ENCODE measurements at regions of chr12 and their contacts with region 1.

Region 1: DNA sequence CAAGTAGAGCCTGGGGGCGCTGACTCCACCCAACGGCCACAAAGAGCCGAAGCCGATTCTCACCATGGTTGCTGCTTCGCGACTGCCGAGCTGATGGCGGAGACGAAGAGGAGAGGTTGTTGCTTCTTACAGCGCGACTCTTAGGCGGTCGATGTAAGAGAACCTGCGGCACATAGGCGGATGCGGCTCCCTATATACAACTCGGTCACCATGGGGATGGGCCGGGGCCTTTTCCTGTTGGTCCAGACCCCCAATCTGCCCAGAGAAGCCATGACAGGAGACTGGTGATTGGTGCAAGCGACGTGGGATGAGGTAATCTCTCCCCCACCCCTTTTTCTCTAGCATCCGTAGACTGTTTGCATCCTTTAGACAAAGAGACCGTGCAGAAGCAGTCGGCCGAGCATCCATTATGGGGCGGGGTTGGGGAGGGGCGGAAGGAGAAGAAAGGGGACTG is at the start of gene TUBA1A:
- DNase-seq: peak; percentile 90 to 99 (median 97)
- H3K4me3 ChIP-seq: peak within 1 kb of the TSS; percentile 79
- H3K4me3 Mint-ChIP-seq: peak within 1 kb of the TSS; percentile 97 to 99 (median 98)
- H3K27ac ChIP-seq: peak within 1 kb of the TSS; percentile 97
- H3K27ac Mint-ChIP-seq: peak within 1 kb of the TSS; percentile 97 to 100 (median 98)
- H3K4me1 ChIP-seq: peaks cover 18% of the 10 kb centered on the region
- H3K4me1 Mint-ChIP-seq: peaks cover 26 to 40% (median 35%) of the 10 kb centered on the region in 3 donors
- H3K27me3 ChIP-seq: no peaks in the 10 kb centered on the region
- H3K27me3 Mint-ChIP-seq: peaks cover 0 to 8% of the 10 kb centered on the region in 2 donors
- total RNA-seq, gene TUBA1A: 67.8 to 70.4 TPM

Region 2: GRCh38 chr12:49110464-49111155 is 78.3 kb before region 1 on chr12 and contains the start of gene LMBR1L:
- CTCF ChIA-PET with region 1: interaction called, 12 read pairs
- POLR2A ChIA-PET with region 1: interaction called, 27 read pairs
- DNase-seq: peak; percentile 92 to 98 (median 96)
- H3K4me3 ChIP-seq: peak within 1 kb of the TSS; percentile 93
- H3K4me3 Mint-ChIP-seq: peak within 1 kb of the TSS; percentile 97 to 99 (median 99)
- H3K27ac ChIP-seq: peak within 1 kb of the TSS; percentile 87
- H3K27ac Mint-ChIP-seq: peak within 1 kb of the TSS; percentile 86 to 98 (median 98)
- H3K4me1 ChIP-seq: peaks cover 21% of the 10 kb centered on the region
- H3K4me1 Mint-ChIP-seq: peaks cover 36 to 44% (median 43%) of the 10 kb centered on the region in 3 donors
- H3K27me3 ChIP-seq: no peaks in the 10 kb centered on the region
- H3K27me3 Mint-ChIP-seq: no peaks in the 10 kb centered on the region
- total RNA-seq, gene LMBR1L: 47.2 to 48.7 TPM

Region 3: GRCh38 chr12:49144384-49144783 is 44.6 kb before region 1 on chr12:
- CTCF ChIA-PET with region 1: no interaction called
- POLR2A ChIA-PET with region 1: no interaction called
- DNase-seq: no peak
- H3K4me3 ChIP-seq: no peak overlapping the region
- H3K4me3 Mint-ChIP-seq: no peak overlapping the region
- H3K27ac ChIP-seq: no peak overlapping the region
- H3K27ac Mint-ChIP-seq: no peak overlapping the region
- H3K4me1 ChIP-seq: no peaks in the 10 kb centered on the region
- H3K4me1 Mint-ChIP-seq: no peaks in the 10 kb centered on the region
- H3K27me3 ChIP-seq: no peaks in the 10 kb centered on the region
- H3K27me3 Mint-ChIP-seq: no peaks in the 10 kb centered on the region

Region 4: DNA sequence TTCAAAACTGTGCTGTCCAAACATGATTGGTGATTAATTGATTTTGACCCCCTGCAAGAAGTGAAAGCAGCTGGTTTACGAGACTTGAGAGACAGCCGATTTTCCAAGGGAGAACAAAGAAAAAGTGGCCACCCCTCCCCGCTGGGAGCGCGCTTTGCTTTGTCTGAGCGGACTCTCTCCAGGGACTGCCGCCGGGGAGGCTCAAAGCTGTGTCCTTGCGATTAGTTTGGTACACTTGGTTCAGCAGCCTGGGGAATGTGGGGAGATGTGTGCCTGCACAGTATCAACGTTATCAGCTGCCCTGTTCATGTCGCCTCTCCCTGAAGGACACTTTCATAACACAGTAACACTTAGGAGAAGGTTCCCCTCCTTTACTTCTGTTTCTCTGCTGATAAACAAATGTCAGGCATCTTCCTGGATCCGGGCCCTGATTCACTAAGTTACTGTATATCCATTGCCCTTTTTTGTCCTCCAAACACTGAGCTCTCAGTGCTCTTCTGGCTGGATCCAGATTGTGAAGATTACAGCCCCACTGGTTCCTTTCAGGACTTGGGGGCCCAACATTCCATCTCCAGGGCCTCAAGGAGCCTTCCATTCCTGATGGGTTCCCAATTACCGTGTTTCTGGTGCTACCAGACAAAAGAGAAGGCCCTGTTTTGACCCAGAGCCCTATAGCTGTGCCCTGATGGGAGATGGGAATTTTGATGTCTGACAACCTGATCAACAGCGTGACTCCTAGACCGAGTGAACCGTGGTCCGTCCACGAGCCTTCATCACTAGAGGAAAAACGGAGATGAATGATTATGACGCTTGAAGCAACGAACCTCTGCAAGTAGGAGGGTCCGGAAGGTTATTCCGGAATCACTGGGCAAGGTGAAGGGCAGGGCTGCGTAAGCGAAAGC is 44.2 kb after region 1 on chr12:
- CTCF ChIA-PET with region 1: interaction called, 6 read pairs
- POLR2A ChIA-PET with region 1: interaction called, 11 read pairs
- DNase-seq: no peak
- H3K4me3 ChIP-seq: no peak overlapping the region
- H3K4me3 Mint-ChIP-seq: peak overlapping the region; percentile 27 to 84 (median 63)
- H3K27ac ChIP-seq: peak overlapping the region; percentile 66
- H3K27ac Mint-ChIP-seq: peak overlapping the region in 3 of 8 donors; percentile 38 to 73 (median 72)
- H3K4me1 ChIP-seq: peaks cover 5% of the 10 kb centered on the region
- H3K4me1 Mint-ChIP-seq: peaks cover 0 to 10% (median 4%) of the 10 kb centered on the region in 3 donors
- H3K27me3 ChIP-seq: no peaks in the 10 kb centered on the region
- H3K27me3 Mint-ChIP-seq: peaks cover 0 to 1% of the 10 kb centered on the region in 2 donors

Region 5: GRCh38 chr12:49264738-49265515 is 76.0 kb after region 1 on chr12 and contains the start of gene TUBA1C:
- CTCF ChIA-PET with region 1: no interaction called
- POLR2A ChIA-PET with region 1: interaction called, 21 read pairs
- DNase-seq: peak; percentile 80 to 90 (median 82)
- H3K4me3 ChIP-seq: peak within 1 kb of the TSS; percentile 93
- H3K4me3 Mint-ChIP-seq: peak within 1 kb of the TSS; percentile 91 to 99 (median 94)
- H3K27ac ChIP-seq: peak within 1 kb of the TSS; percentile 96
- H3K27ac Mint-ChIP-seq: peak within 1 kb of the TSS; percentile 61 to 97 (median 92)
- H3K4me1 ChIP-seq: peaks cover 8% of the 10 kb centered on the region
- H3K4me1 Mint-ChIP-seq: peaks cover 21 to 39% (median 33%) of the 10 kb centered on the region in 3 donors
- H3K27me3 ChIP-seq: no peaks in the 10 kb centered on the region
- H3K27me3 Mint-ChIP-seq: no peaks in the 10 kb centered on the region
- total RNA-seq, gene TUBA1C: 351 to 356 TPM